ENCODE measurements at regions of chr3 and their contacts with region 1.

Region 1: GRCh38 chr3:195204360-195205163 is 66.4 kb downstream of the XXYLT1 start:
- DNase-seq: no peak
- H3K4me3 ChIP-seq: no peak overlapping the region
- H3K27ac ChIP-seq: no peak overlapping the region
- H3K4me1 ChIP-seq: 0 out of 2 replicates have a peak, but pooled peaks cover 9% of the 10 kb centered on the region
- H3K27me3 ChIP-seq: no peaks in the 10 kb centered on the region
- CTCF ChIP-seq: no peak

Region 2: DNA sequence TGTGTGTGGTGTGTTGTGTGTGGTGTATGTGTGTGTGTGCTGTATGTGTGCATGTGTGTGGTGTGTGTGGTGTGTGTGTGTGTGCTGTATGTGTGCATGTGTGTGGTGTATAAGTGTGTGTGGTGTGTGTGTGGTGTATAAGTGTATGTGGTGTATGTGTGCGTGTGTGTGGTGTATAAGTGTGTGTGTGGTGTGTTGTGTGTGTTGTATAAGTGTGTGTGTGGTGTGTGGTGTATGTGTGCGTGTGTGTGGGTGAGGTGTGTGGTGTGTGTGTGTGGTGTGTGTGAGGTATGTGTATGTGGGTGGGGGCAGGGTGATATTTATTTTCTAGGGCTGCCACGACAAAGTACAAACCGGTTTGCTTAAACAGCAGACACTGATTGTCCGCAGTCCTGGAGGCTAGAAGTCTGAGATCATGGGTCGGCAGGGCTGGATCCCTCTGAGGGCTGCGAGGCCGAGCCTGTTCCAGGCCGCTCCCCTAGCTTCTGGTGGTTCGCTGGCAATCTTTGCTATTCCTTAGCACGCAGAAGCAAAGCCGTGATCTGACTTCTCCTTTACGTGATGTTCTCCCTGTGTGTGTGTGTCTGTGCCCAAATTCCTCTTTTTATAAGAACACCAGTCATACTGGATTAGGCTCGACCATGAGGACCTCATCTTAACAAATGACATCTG is 93.8 kb before region 1 on chr3:
- CTCF ChIA-PET with region 1: no interaction called
- POLR2A ChIA-PET with region 1: no interaction called
- intact Hi-C with region 1: no loop called
- DNase-seq: no peak
- H3K4me3 ChIP-seq: no peak overlapping the region
- H3K27ac ChIP-seq: no peak overlapping the region
- H3K4me1 ChIP-seq: 0 out of 2 replicates have a peak, but pooled peaks cover under 1% of the 10 kb centered on the region
- H3K27me3 ChIP-seq: no peaks in the 10 kb centered on the region
- CTCF ChIP-seq: no peak

Region 3: DNA sequence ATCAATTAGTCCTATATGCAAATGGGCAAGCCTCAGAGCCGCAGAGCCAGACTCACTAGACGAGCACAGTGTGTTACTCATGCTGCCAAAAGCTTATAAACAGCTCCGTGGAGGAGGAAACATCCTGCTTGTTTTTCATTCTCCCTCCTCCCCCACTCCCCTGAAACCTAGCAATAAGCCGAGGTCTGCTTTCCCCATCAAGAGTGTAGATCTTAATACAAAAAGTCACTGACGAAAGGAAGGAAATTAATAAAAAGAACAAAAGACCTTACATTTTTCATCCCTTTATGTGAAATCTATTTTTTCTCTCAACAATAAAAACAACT is 22.1 kb before region 1 on chr3:
- CTCF ChIA-PET with region 1: interaction called, 19 read pairs
- POLR2A ChIA-PET with region 1: no interaction called
- intact Hi-C with region 1: no loop called
- DNase-seq: no peak
- H3K4me3 ChIP-seq: no peak overlapping the region
- H3K27ac ChIP-seq: no peak overlapping the region
- H3K4me1 ChIP-seq: peaks cover 23% of the 10 kb centered on the region
- H3K27me3 ChIP-seq: no peaks in the 10 kb centered on the region
- CTCF ChIP-seq: no peak

Region 4: GRCh38 chr3:195250473-195251251 is 46.1 kb after region 1 on chr3:
- CTCF ChIA-PET with region 1: interaction called, 11 read pairs
- POLR2A ChIA-PET with region 1: no interaction called
- intact Hi-C with region 1: no loop called
- DNase-seq: no peak
- H3K4me3 ChIP-seq: no peak overlapping the region
- H3K27ac ChIP-seq: no peak overlapping the region
- H3K4me1 ChIP-seq: no peaks in the 10 kb centered on the region
- H3K27me3 ChIP-seq: no peaks in the 10 kb centered on the region
- CTCF ChIP-seq: no peak

Region 5: GRCh38 chr3:195850857-195851543 is 646.4 kb after region 1 on chr3:
- CTCF ChIA-PET with region 1: no interaction called
- POLR2A ChIA-PET with region 1: no interaction called
- intact Hi-C with region 1: no loop called
- DNase-seq: peak; percentile 86 to 92
- H3K4me3 ChIP-seq: no peak overlapping the region
- H3K27ac ChIP-seq: no peak overlapping the region
- H3K4me1 ChIP-seq: peaks cover 67% of the 10 kb centered on the region
- H3K27me3 ChIP-seq: no peaks in the 10 kb centered on the region
- CTCF ChIP-seq: peak; percentile 100